ENCODE measurements at regions of chr2 and their contacts with region 1.

Region 1: GRCh38 chr2:25426326-25426725 is 84.6 kb upstream of the DNMT3A start:
- DNase-seq: no peak
- ATAC-seq: no peak
- H3K4me3 ChIP-seq: no peak overlapping the region
- H3K27ac ChIP-seq: no peak overlapping the region; the same call in 1 of the 2 replicates
- H3K4me1 ChIP-seq: peaks cover 25% of the 10 kb centered on the region
- H3K27me3 ChIP-seq: no peaks in the 10 kb centered on the region
- CTCF ChIP-seq: no peak
- EP300 ChIP-seq: no peak
- POLR2A ChIP-seq: no peak
- RAD21 ChIP-seq: no peak

Region 2: DNA sequence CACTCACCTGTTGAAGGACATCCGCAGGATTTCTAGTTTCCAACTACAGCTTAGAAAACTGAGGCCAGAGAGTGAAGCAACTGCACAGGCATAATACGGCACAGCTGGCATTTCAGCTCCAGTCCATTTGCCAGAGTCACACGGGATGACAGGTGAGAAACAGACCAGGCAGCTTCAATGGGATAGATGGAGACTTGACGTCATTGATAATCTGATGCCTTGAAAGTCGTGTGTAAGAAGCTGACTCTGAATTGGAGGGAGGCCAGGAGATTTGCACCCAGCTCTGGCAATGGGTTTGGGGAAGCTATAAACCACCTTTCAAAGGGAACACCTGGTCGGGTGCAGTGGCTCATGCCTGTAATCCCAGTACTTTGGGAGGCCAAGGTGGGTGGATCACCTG is 72.2 kb before region 1 on chr2:
- CTCF ChIA-PET with region 1: no interaction called
- POLR2A ChIA-PET with region 1: no interaction called
- RAD21 ChIA-PET with region 1: no interaction called
- SMC1A ChIA-PET with region 1: no interaction called
- in situ Hi-C with region 1: no loop called
- intact Hi-C with region 1: no loop called
- DNase-seq: no peak
- ATAC-seq: no peak
- H3K4me3 ChIP-seq: no peak overlapping the region
- H3K27ac ChIP-seq: no peak overlapping the region
- H3K4me1 ChIP-seq: peaks cover 11% of the 10 kb centered on the region
- H3K27me3 ChIP-seq: peaks cover 1 to 2% of the 10 kb centered on the region in 2 experiments; a peak in 1 of 4 replicates
- CTCF ChIP-seq: no peak
- EP300 ChIP-seq: no peak
- POLR2A ChIP-seq: no peak
- RAD21 ChIP-seq: no peak

Region 3: DNA sequence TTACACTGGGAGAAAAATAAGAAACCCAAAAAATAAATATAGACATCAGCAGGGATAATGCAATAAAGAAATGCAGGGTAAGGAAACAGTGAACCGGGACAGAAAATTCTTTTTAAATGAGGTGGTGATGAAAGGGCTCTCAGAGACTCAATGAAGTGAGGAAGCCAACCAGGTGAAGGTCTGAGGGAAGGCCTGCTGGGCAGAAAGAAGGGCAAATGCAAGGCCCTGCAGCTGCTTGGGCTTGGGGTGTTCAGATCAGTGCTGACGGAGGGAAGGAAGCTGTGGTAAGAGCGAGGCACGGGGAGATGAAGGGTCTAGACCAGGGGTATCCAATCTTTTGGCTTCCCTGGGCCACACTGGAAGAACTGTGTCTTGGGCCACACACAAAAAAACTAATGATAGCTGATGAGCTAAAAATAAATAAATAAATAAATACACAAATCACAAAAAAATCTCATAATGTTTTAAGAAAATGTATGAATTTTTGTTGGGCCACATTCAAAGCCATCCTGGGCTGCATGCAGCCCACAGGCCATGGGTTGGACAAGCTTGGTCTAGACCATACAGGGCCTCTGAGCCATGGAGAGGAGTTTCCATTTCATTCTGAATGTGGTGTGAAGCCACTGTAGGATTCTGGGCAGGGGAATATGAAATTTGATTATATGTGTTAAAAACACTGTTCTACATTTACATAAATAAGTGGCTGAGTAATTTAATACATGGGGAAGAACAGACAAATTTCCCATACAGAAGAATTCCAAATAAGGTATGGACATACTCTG is 11.7 kb after region 1 on chr2:
- CTCF ChIA-PET with region 1: interaction called, 17 read pairs
- POLR2A ChIA-PET with region 1: interaction called, 10 read pairs
- RAD21 ChIA-PET with region 1: interaction called, 3 read pairs
- SMC1A ChIA-PET with region 1: interaction called, 13 read pairs
- in situ Hi-C with region 1: no loop called
- intact Hi-C with region 1: no loop called
- DNase-seq: no peak
- ATAC-seq: peak; percentile 52; the same call in 2 of the 3 replicates
- H3K4me3 ChIP-seq: no peak overlapping the region
- H3K27ac ChIP-seq: no peak overlapping the region
- H3K4me1 ChIP-seq: peaks cover 7% of the 10 kb centered on the region; the same call in 1 of the 2 replicates
- H3K27me3 ChIP-seq: no peaks in the 10 kb centered on the region
- CTCF ChIP-seq: no peak
- EP300 ChIP-seq: no peak
- POLR2A ChIP-seq: no peak
- RAD21 ChIP-seq: no peak